ENCODE measurements at regions of chr16 and their contacts with region 1.

Region 1: GRCh38 chr16:27721531-27722181 is 171.7 kb downstream of the KATNIP start:
- DNase-seq: no peak
- ATAC-seq: no peak
- H3K4me3 ChIP-seq: no peak overlapping the region
- H3K27ac ChIP-seq: no peak overlapping the region
- H3K4me1 ChIP-seq: peaks cover 3% of the 10 kb centered on the region; the same call in 1 of the 2 replicates
- H3K27me3 ChIP-seq: no peaks in the 10 kb centered on the region
- CTCF ChIP-seq: no peak

Region 2: DNA sequence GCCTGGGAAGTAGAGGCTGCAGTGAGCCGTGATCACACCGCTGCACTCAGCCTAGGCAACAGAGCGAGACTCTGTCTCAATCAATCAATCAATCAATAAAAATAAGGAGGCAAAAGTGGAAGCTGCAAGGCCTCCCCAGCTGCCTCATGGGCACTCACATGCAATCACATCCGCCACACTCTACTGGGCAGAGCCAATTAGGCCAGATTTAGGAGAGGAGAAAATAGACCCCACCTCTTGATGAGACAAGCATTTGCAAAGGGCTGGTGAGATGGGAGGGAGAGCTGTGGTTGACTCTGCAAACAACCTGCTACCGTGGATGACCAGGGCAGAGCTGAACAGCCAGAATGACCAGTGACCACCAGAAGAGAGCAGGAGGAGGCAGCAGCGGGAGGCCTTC is 356.6 kb after region 1 on chr16:
- CTCF ChIA-PET with region 1: interaction called, 10 read pairs
- POLR2A ChIA-PET with region 1: no interaction called
- intact Hi-C with region 1: no loop called
- DNase-seq: no peak
- ATAC-seq: no peak
- H3K4me3 ChIP-seq: no peak overlapping the region
- H3K27ac ChIP-seq: no peak overlapping the region
- H3K4me1 ChIP-seq: no peaks in the 10 kb centered on the region
- H3K27me3 ChIP-seq: no peaks in the 10 kb centered on the region
- CTCF ChIP-seq: no peak